Common myeloid progenitor, CD34-positive (primary cell): ENCODE measurements at regions of chr11 and their contacts with region 1.

Region 1: GRCh38 chr11:86696004-86696403 is 23.6 kb upstream of the ME3 start:
- DNase-seq: peak in 1 of 3 donors; percentile 37
- H3K4me3 ChIP-seq: no peak overlapping the region
- H3K27ac ChIP-seq: no peak overlapping the region
- H3K4me1 ChIP-seq: peaks cover 0 to 8% (median 0%) of the 10 kb centered on the region in 4 experiments
- H3K27me3 ChIP-seq: no peaks in the 10 kb centered on the region

Region 2: DNA sequence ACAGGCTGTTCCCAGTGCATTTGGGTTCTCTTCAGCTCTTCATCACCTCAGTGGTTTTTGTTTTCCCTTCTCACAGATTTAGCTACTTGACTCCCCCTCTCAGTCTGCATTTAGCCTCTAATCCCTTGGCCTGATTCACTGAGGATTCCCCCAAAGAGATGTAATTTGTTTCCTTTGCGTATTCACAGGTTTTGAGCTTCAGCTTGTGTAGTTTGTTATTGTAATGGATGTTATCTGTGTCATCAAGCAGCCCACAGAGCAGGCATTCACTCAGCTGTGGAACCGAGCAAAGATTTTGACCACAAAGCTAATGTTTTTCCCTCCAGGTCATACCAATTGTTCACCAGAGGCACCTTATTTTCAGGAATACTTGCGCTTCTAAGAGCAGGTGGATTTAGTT is 17.2 kb before region 1 on chr11:
- CTCF ChIA-PET with region 1: interaction called, 18 read pairs
- POLR2A ChIA-PET with region 1: no interaction called
- DNase-seq: no peak
- H3K4me3 ChIP-seq: no peak overlapping the region
- H3K27ac ChIP-seq: no peak overlapping the region
- H3K4me1 ChIP-seq: peaks cover 0 to 32% (median 11%) of the 10 kb centered on the region in 4 experiments
- H3K27me3 ChIP-seq: no peaks in the 10 kb centered on the region

Region 3: DNA sequence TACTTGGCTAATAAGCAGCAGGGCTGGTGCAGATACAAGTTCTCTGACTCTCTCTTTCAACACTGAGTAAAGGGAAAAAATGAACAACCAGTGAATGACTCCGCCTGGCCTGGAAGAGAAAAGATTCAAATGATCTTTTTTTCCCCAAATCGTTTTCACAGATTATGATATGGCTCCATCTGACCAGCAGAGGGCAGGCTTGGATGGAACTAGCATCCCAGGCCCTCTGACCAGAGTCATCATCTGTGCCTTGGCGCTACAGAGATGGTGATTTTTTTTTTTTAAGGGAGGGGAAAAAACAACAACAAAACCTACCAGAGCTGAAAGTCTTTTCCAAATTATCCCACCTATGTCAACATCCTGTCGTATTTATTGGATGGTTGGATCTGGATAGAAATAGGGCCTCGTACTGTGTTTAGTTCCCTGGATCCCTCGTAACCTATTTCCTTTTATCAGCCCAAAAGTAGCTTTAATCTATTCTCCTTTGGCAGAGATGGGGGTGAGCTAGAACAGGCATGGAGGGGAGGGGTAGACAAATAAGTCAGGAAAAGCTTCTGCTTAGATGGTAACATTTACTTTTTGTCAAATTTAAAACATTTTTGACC is 174.1 kb after region 1 on chr11:
- CTCF ChIA-PET with region 1: no interaction called
- POLR2A ChIA-PET with region 1: no interaction called
- DNase-seq: peak; percentile 35 to 55 (median 47)
- H3K4me3 ChIP-seq: no peak overlapping the region
- H3K27ac ChIP-seq: no peak overlapping the region
- H3K4me1 ChIP-seq: no peaks in the 10 kb centered on the region
- H3K27me3 ChIP-seq: no peaks in the 10 kb centered on the region